Endothelial cell of umbilical vein (primary cell): ENCODE measurements at regions of chr1 and their contacts with region 1.

Region 1: GRCh38 chr1:93672069-93672468 is 9.6 kb downstream of the BCAR3 start:
- DNase-seq: peak; percentile 98
- H3K4me3 ChIP-seq: no peak overlapping the region
- H3K27ac ChIP-seq: peak overlapping the region; percentile 92
- H3K4me1 ChIP-seq: peaks cover 86% of the 10 kb centered on the region
- H3K27me3 ChIP-seq: no peaks in the 10 kb centered on the region
- CTCF ChIP-seq: no peak
- POLR2A ChIP-seq: peak; percentile 51

Region 2: GRCh38 chr1:93447516-93448291 is 224.4 kb before region 1 on chr1 and contains the start of gene FNBP1L:
- CTCF ChIA-PET with region 1: no interaction called
- POLR2A ChIA-PET with region 1: no interaction called
- dilution Hi-C with region 1: no loop called
- intact Hi-C with region 1: loop called (anchors 5 kb)
- DNase-seq: peak; percentile 78
- H3K4me3 ChIP-seq: peak within 1 kb of the TSS; percentile 14 to 80 (median 70)
- H3K27ac ChIP-seq: peak within 1 kb of the TSS; percentile 65
- H3K4me1 ChIP-seq: peaks cover 13% of the 10 kb centered on the region
- H3K27me3 ChIP-seq: no peaks in the 10 kb centered on the region
- CTCF ChIP-seq: no peak
- POLR2A ChIP-seq: peak; percentile 85
- total RNA-seq, gene FNBP1L: 56.4 and 56.5 TPM in 2 replicates

Region 3: GRCh38 chr1:93567255-93567918 is 104.7 kb before region 1 on chr1:
- CTCF ChIA-PET with region 1: no interaction called
- POLR2A ChIA-PET with region 1: no interaction called
- dilution Hi-C with region 1: no loop called
- intact Hi-C with region 1: loop called (anchors 5 kb)
- DNase-seq: peak; percentile 81
- H3K4me3 ChIP-seq: no peak overlapping the region
- H3K27ac ChIP-seq: peak overlapping the region; percentile 34
- H3K4me1 ChIP-seq: peaks cover 24% of the 10 kb centered on the region
- H3K27me3 ChIP-seq: no peaks in the 10 kb centered on the region
- CTCF ChIP-seq: no peak
- POLR2A ChIP-seq: no peak

Region 4: GRCh38 chr1:93661829-93662474 is 10.1 kb before region 1 on chr1:
- CTCF ChIA-PET with region 1: interaction called, 6 read pairs
- POLR2A ChIA-PET with region 1: interaction called, 3 read pairs
- dilution Hi-C with region 1: no loop called
- intact Hi-C with region 1: loop called (anchors 1 kb)
- DNase-seq: peak; percentile 63
- H3K4me3 ChIP-seq: peak overlapping the region in 1 of 3 experiments; percentile 18
- H3K27ac ChIP-seq: peak overlapping the region; percentile 92
- H3K4me1 ChIP-seq: peaks cover 50% of the 10 kb centered on the region
- H3K27me3 ChIP-seq: no peaks in the 10 kb centered on the region
- CTCF ChIP-seq: no peak
- POLR2A ChIP-seq: no peak

Region 5: GRCh38 chr1:93692983-93693591 is 21.0 kb after region 1 on chr1:
- CTCF ChIA-PET with region 1: interaction called, 11 read pairs
- POLR2A ChIA-PET with region 1: no interaction called
- dilution Hi-C with region 1: no loop called
- intact Hi-C with region 1: no loop called
- DNase-seq: peak; percentile 77
- H3K4me3 ChIP-seq: no peak overlapping the region
- H3K27ac ChIP-seq: peak overlapping the region; percentile 85
- H3K4me1 ChIP-seq: peaks cover 27% of the 10 kb centered on the region
- H3K27me3 ChIP-seq: no peaks in the 10 kb centered on the region
- CTCF ChIP-seq: no peak
- POLR2A ChIP-seq: no peak